Endothelial cell of umbilical vein (primary cell): ENCODE measurements at regions of chr10 and their contacts with region 1.

Region 1: GRCh38 chr10:89553064-89553734 is 17.8 kb upstream of the SLC16A12 start:
- DNase-seq: peak; percentile 93
- H3K4me3 ChIP-seq: no peak overlapping the region
- H3K27ac ChIP-seq: no peak overlapping the region
- H3K4me1 ChIP-seq: peaks cover 4% of the 10 kb centered on the region
- H3K27me3 ChIP-seq: no peaks in the 10 kb centered on the region
- CTCF ChIP-seq: no peak
- POLR2A ChIP-seq: no peak

Region 2: DNA sequence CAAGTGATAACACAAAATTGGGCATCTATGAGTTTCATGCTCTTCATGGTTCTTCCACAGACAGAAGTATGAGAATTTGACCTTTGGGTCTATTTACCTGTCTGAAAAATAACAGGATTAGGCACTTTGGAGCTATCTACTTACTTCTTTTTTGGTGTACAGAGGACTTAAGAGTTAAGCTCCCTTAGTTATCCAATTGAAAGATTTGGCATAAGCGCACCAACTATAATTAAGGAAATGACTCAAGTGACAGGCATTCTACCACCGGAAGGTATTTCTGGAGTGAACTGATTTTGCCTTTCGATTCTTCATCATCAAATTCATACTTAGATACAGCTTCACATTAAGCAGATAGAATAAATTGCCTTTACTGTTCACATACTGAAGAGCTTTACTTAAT is 94.9 kb before region 1 on chr10:
- CTCF ChIA-PET with region 1: interaction called, 3 read pairs
- POLR2A ChIA-PET with region 1: no interaction called
- dilution Hi-C with region 1: no loop called
- intact Hi-C with region 1: loop called (anchors 1 kb)
- DNase-seq: peak; percentile 80
- H3K4me3 ChIP-seq: peak overlapping the region in 1 of 3 experiments; percentile 37
- H3K27ac ChIP-seq: peak overlapping the region; percentile 40
- H3K4me1 ChIP-seq: peaks cover 17% of the 10 kb centered on the region
- H3K27me3 ChIP-seq: no peaks in the 10 kb centered on the region
- CTCF ChIP-seq: no peak
- POLR2A ChIP-seq: no peak

Region 3: DNA sequence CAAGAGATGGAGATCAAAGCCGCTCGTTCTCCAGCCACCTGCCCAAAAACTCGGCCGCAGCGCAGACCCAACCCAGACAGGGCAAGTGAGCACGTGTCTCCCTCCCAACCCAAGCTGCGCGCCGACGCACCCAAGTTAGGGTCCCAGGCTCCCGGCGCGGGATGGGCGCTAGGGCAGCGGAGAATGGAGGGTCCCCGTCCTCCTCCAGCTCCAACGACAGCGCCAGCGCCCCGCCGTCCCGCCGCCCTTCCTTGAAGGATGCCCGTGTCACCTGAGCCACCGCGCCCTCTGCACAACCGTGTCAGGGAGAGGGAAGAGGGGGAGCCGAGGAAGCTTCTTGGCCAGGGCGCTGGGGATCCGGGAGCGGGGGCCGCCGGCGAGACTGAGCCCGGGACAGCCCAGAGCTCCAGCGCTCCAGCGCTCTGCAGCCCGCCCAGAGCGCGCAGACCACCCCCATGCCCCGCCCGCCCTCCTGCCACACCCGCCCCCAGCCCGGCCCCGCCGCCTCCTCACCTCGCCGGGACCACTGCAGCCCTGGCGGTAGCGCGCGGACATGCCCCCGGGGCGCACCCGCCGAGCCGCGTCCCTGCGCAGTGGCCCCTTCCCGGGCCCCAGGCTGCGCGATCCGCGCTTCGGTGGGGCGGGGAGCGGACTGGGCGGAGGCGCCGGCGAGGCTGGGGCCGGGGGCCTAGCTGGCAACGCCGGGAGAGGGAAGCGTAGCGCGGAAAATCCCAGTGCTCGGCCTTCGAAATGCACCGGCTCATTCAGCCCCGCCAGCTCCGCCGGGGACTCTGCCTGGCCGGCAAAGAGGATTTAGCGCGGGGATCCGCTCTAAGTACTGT is 17.8 kb before region 1 on chr10 and contains the start of gene SLC16A12:
- CTCF ChIA-PET with region 1: interaction called, 6 read pairs
- POLR2A ChIA-PET with region 1: no interaction called
- dilution Hi-C with region 1: no loop called
- intact Hi-C with region 1: loop called (anchors 1 kb)
- DNase-seq: no peak
- H3K4me3 ChIP-seq: peak within 1 kb of the TSS in 2 of 3 experiments; percentile 31 to 38
- H3K27ac ChIP-seq: no peak within 1 kb of the TSS
- H3K4me1 ChIP-seq: peaks cover 3% of the 10 kb centered on the region
- H3K27me3 ChIP-seq: peaks cover 33 to 63% of the 10 kb centered on the region in 2 experiments
- CTCF ChIP-seq: no peak
- POLR2A ChIP-seq: no peak
- total RNA-seq, gene SLC16A12: not detected in 2 replicates